PC-3 (cell line): ENCODE measurements at regions of chr5 and their contacts with region 1.

Region 1: DNA sequence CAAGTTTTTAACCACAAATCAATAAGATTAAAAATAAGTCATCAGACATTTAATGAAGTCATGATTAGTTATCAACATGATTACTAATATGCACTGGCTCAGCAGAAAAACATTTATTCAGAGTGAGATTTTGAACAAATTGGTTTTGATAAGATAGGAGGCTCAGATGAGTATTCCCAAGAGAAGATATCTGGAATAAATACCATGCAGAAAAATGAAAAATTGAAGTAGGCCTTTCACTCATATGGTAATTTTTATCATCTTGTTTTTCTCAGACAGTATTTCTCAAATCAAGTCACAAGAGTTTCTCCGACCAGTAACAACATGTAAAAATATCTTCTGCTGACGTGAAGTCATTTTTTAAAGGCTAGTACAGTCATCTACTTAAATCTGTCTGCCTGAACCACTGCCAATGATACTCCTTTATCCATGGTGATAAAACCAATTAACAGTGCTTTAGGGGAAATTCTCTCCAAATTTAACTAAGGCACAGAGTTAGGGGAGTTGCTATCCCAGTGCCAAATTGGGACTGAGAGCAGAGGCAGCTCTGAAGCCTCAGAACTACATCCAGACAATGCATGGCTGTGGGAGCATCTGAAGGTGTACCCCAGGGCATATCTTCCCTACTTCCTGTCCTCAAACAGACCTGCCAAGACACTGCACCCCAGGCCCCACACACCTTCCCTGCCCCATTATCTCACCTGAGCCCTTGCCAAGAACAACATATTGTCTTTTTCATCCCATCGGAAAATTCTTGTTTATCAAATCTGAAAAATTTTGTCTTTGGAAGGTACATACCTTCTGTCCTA is 105.5 kb upstream of the TSLP start:
- DNase-seq: peak; percentile 52
- ATAC-seq: peak; percentile 39
- H3K4me3 ChIP-seq: no peak overlapping the region
- H3K27ac ChIP-seq: peak overlapping the region; percentile 96
- H3K4me1 ChIP-seq: peaks cover 68% of the 10 kb centered on the region
- H3K27me3 ChIP-seq: no peaks in the 10 kb centered on the region
- CTCF ChIP-seq: no peak

Region 2: GRCh38 chr5:110194191-110194590 is 771.8 kb before region 1 on chr5:
- CTCF ChIA-PET with region 1: no interaction called
- POLR2A ChIA-PET with region 1: no interaction called
- intact Hi-C with region 1: no loop called
- DNase-seq: no peak
- ATAC-seq: no peak
- H3K4me3 ChIP-seq: no peak overlapping the region
- H3K27ac ChIP-seq: no peak overlapping the region
- H3K4me1 ChIP-seq: no peaks in the 10 kb centered on the region
- H3K27me3 ChIP-seq: no peaks in the 10 kb centered on the region
- CTCF ChIP-seq: no peak

Region 3: GRCh38 chr5:110757118-110757729 is 208.8 kb before region 1 on chr5:
- CTCF ChIA-PET with region 1: no interaction called
- POLR2A ChIA-PET with region 1: no interaction called
- intact Hi-C with region 1: loop called (anchors 5 kb)
- DNase-seq: peak; percentile 84
- ATAC-seq: peak; percentile 41
- H3K4me3 ChIP-seq: no peak overlapping the region
- H3K27ac ChIP-seq: no peak overlapping the region
- H3K4me1 ChIP-seq: peaks cover 5% of the 10 kb centered on the region
- H3K27me3 ChIP-seq: no peaks in the 10 kb centered on the region
- CTCF ChIP-seq: peak; percentile 89

Region 4: GRCh38 chr5:110880413-110880812 is 85.6 kb before region 1 on chr5:
- CTCF ChIA-PET with region 1: no interaction called
- POLR2A ChIA-PET with region 1: no interaction called
- intact Hi-C with region 1: loop called (anchors 5 kb)
- DNase-seq: peak; percentile 99
- ATAC-seq: peak; percentile 80
- H3K4me3 ChIP-seq: no peak overlapping the region
- H3K27ac ChIP-seq: peak overlapping the region; percentile 87
- H3K4me1 ChIP-seq: peaks cover 29% of the 10 kb centered on the region
- H3K27me3 ChIP-seq: no peaks in the 10 kb centered on the region
- CTCF ChIP-seq: no peak

Region 5: DNA sequence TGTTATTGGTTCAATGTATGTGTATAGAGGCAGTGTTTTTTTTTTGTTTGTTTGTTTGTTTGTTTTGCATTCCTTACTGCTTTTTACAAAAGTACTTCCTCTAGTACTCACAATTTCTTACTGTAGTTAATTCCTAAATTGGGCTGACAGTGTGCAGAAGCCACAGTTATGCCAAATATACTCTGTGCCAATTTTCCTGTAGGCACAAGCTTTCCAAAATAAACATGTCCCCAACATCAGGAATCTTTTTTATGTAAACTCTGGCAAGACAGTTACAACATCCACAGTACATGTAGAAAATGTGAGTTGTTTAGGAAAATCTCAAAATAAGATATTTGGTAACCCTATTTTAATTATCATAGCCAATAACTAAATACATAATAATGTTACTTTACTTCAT is 56.0 kb before region 1 on chr5:
- CTCF ChIA-PET with region 1: no interaction called
- POLR2A ChIA-PET with region 1: no interaction called
- intact Hi-C with region 1: loop called (anchors 2 kb)
- DNase-seq: peak; percentile 60
- ATAC-seq: peak; percentile 79
- H3K4me3 ChIP-seq: no peak overlapping the region
- H3K27ac ChIP-seq: no peak overlapping the region
- H3K4me1 ChIP-seq: peaks cover 30% of the 10 kb centered on the region
- H3K27me3 ChIP-seq: no peaks in the 10 kb centered on the region
- CTCF ChIP-seq: no peak

Region 6: GRCh38 chr5:110977915-110978314 is 11.9 kb after region 1 on chr5:
- CTCF ChIA-PET with region 1: no interaction called
- POLR2A ChIA-PET with region 1: no interaction called
- intact Hi-C with region 1: loop called (anchors 1 kb)
- DNase-seq: no peak
- ATAC-seq: peak; percentile 91
- H3K4me3 ChIP-seq: no peak overlapping the region
- H3K27ac ChIP-seq: peak overlapping the region; percentile 42
- H3K4me1 ChIP-seq: 0 out of 2 replicates have a peak, but pooled peaks cover 7% of the 10 kb centered on the region
- H3K27me3 ChIP-seq: no peaks in the 10 kb centered on the region
- CTCF ChIP-seq: no peak

Region 7: GRCh38 chr5:111075520-111075919 is 109.5 kb after region 1 on chr5:
- CTCF ChIA-PET with region 1: no interaction called
- POLR2A ChIA-PET with region 1: no interaction called
- intact Hi-C with region 1: loop called (anchors 5 kb)
- DNase-seq: peak; percentile 87
- ATAC-seq: peak; percentile 90
- H3K4me3 ChIP-seq: no peak overlapping the region
- H3K27ac ChIP-seq: no peak overlapping the region
- H3K4me1 ChIP-seq: peaks cover 15% of the 10 kb centered on the region
- H3K27me3 ChIP-seq: no peaks in the 10 kb centered on the region
- CTCF ChIP-seq: no peak

Region 8: DNA sequence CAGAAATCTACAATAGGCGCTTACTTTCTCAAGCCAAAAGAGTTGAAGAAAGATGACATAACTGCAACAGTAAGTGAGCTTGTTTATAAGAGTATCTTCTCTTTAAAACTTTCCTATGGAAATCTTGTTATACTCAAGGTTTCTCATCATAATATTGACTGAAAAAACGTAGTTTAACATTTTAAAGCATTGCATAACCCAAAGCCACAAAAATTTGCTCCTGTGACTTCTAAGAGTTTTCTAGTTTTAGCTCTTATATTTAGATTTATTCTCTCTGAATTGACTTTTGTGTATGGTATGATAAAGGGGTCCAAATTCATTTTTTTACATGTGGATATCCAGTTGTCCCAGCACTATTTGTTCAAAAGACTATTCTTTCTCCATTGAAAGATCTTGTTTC is 141.4 kb after region 1 on chr5:
- CTCF ChIA-PET with region 1: no interaction called
- POLR2A ChIA-PET with region 1: no interaction called
- intact Hi-C with region 1: no loop called
- DNase-seq: no peak
- ATAC-seq: no peak
- H3K4me3 ChIP-seq: no peak overlapping the region
- H3K27ac ChIP-seq: no peak overlapping the region
- H3K4me1 ChIP-seq: no peaks in the 10 kb centered on the region
- H3K27me3 ChIP-seq: no peaks in the 10 kb centered on the region
- CTCF ChIP-seq: no peak